Endothelial cell of umbilical vein (primary cell): ENCODE measurements at regions of chr15 and their contacts with region 1.

Region 1: GRCh38 chr15:51499379-51499976 is 123.1 kb downstream of the DMXL2 start:
- DNase-seq: peak; percentile 59
- H3K4me3 ChIP-seq: no peak overlapping the region
- H3K27ac ChIP-seq: no peak overlapping the region
- H3K4me1 ChIP-seq: peaks cover 19% of the 10 kb centered on the region
- H3K27me3 ChIP-seq: no peaks in the 10 kb centered on the region
- CTCF ChIP-seq: peak; percentile 61 to 66
- POLR2A ChIP-seq: no peak

Region 2: DNA sequence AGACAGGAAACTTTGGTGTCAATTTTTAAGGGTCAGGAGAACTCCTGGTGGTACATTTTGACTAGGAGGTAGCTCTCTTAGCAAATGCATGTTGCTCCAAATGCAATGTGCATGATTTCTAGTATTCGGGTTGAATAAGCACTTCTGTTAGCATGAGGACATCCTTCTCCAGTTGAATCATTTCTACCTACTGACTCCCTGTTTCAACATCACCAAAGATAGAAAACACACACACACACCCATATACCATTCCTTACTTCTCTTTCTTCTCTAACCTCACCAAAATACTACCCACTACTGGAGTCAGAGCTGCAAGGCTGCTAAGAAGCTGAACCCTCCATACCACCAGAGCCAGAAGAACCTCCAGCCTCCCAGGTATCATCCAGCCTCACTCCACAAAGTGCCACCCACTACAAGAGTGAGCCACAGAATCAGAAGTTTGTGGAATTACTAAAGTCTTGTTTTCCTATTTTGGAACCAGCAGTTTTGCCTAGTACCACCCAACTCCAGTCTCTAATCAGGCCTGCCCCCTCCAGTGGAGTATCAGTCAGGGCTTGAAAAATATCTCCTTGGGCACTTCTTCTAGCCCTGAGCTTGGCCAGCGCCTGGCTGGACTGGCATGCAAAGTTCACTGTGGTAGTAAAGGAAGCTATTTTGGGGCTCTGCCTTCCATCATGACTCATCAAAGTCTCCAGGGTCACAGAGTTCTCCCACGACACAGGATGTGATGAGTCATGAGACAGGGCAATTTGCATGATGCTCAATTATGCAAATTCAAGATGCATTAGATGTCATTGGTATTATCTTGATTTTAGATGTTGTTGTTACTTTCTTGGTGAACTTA is 271.3 kb before region 1 on chr15:
- CTCF ChIA-PET with region 1: interaction called, 16 read pairs
- POLR2A ChIA-PET with region 1: no interaction called
- dilution Hi-C with region 1: no loop called
- intact Hi-C with region 1: loop called (anchors 5 kb)
- DNase-seq: peak; percentile 60
- H3K4me3 ChIP-seq: no peak overlapping the region
- H3K27ac ChIP-seq: peak overlapping the region; percentile 11
- H3K4me1 ChIP-seq: peaks cover 27% of the 10 kb centered on the region
- H3K27me3 ChIP-seq: peaks cover 21 to 24% of the 10 kb centered on the region in 2 experiments
- CTCF ChIP-seq: no peak
- POLR2A ChIP-seq: no peak

Region 3: GRCh38 chr15:51516291-51516690 is 16.8 kb after region 1 on chr15:
- CTCF ChIA-PET with region 1: interaction called, 10 read pairs
- POLR2A ChIA-PET with region 1: no interaction called
- dilution Hi-C with region 1: no loop called
- intact Hi-C with region 1: no loop called
- DNase-seq: no peak
- H3K4me3 ChIP-seq: no peak overlapping the region
- H3K27ac ChIP-seq: no peak overlapping the region
- H3K4me1 ChIP-seq: no peaks in the 10 kb centered on the region
- H3K27me3 ChIP-seq: no peaks in the 10 kb centered on the region
- CTCF ChIP-seq: no peak
- POLR2A ChIP-seq: no peak